ENCODE measurements at regions of chr17 and their contacts with region 1.

Region 1: DNA sequence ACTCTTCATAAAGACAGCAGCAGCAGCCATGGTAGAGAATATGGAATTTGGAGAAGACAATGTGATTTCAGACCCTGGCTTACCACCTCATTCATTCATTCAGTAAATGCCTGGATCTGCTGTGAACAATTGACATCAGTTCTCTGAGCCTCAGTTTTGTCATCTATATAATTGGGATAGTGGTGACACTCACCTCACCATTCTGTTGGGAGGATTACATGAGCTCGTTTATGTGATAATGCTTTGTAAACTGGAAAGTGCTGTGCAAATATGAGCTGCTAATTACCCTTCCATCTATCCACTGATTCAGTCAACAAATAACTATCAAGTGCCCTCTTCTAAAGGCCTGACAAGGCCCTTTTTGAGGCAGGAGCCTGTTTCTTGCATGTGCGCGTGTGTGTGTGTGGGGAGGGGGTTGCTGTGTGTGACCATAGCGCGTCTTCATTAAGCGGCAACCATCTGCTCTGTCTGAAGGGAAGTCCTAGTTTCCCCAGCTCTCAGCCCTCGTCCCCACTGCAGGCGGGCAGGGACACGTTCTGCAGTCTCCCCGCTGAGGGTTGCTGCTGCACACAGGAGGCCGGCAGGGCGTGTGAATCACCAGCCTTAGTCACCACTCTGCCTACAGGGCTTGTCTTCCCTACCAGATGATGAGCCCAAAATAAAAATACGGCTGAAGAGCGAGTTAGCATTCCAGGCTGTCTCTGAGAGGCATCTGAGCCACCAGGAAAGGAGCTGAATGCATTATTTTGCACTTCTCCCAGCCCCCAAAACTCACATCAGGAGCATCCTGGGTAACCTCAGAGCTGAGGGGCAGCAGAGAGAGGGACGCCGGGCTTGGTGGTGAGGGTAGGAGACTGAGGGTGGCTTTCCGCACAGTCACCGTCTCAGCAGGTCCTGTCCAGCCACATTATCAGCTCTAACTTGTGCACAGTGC is 19.9 kb downstream of the ARL4D start:
- DNase-seq: peak; percentile 94
- H3K4me3 Mint-ChIP-seq: peak overlapping the region; percentile 59
- H3K27ac Mint-ChIP-seq: peak overlapping the region; percentile 76
- H3K4me1 Mint-ChIP-seq: peaks cover 41% of the 10 kb centered on the region
- H3K27me3 Mint-ChIP-seq: no peaks in the 10 kb centered on the region
- CTCF ChIP-seq: no peak

Region 2: GRCh38 chr17:43388359-43389045 is 30.2 kb before region 1 on chr17:
- CTCF ChIA-PET with region 1: interaction called, 25 read pairs
- POLR2A ChIA-PET with region 1: interaction called, 654 read pairs
- intact Hi-C with region 1: no loop called
- DNase-seq: peak; percentile 94
- H3K4me3 Mint-ChIP-seq: peak overlapping the region; percentile 83
- H3K27ac Mint-ChIP-seq: peak overlapping the region; percentile 97
- H3K4me1 Mint-ChIP-seq: peaks cover 18% of the 10 kb centered on the region
- H3K27me3 Mint-ChIP-seq: no peaks in the 10 kb centered on the region
- CTCF ChIP-seq: no peak

Region 3: DNA sequence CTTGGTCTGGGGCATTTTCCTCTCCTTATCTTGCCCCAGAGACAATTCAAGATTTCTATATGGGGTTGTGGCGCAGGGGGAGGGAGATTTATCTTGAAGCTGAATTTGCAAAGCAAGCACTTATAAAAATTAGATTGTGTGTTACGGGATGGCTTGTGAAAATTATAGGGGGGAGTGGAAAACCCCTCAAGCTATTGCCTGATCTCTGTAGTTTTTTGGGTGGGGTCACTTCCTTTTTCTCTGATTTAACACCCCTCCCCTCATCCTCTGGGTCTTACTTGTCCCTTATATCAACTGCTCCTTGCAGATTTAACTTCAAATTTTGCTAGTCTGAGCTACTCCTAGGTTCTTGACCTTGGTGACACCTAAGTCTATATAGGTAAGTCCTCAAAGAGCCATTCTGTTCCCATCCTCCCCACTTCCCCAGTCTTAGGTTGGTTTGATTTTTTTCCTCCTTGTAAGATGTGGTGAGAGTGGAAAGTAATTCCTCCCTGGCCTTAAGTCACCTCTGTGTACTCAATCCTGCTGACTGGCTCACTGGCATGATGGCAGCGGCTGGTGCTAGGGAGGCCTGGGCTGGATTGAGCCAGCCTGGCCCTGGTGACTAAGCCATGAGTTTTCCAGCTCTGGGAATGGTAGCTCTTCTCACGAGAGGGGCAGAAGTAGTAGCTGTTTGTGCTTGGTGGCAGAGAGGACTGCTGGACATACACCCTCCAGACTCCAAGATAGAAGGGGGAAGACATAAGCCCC is 17.6 kb before region 1 on chr17:
- CTCF ChIA-PET with region 1: interaction called, 25 read pairs
- POLR2A ChIA-PET with region 1: interaction called, 654 read pairs
- intact Hi-C with region 1: loop called (anchors 1 kb)
- DNase-seq: peak; percentile 86
- H3K4me3 Mint-ChIP-seq: peak overlapping the region; percentile 92
- H3K27ac Mint-ChIP-seq: peak overlapping the region; percentile 57
- H3K4me1 Mint-ChIP-seq: peaks cover 21% of the 10 kb centered on the region
- H3K27me3 Mint-ChIP-seq: no peaks in the 10 kb centered on the region
- CTCF ChIP-seq: no peak

Region 4: DNA sequence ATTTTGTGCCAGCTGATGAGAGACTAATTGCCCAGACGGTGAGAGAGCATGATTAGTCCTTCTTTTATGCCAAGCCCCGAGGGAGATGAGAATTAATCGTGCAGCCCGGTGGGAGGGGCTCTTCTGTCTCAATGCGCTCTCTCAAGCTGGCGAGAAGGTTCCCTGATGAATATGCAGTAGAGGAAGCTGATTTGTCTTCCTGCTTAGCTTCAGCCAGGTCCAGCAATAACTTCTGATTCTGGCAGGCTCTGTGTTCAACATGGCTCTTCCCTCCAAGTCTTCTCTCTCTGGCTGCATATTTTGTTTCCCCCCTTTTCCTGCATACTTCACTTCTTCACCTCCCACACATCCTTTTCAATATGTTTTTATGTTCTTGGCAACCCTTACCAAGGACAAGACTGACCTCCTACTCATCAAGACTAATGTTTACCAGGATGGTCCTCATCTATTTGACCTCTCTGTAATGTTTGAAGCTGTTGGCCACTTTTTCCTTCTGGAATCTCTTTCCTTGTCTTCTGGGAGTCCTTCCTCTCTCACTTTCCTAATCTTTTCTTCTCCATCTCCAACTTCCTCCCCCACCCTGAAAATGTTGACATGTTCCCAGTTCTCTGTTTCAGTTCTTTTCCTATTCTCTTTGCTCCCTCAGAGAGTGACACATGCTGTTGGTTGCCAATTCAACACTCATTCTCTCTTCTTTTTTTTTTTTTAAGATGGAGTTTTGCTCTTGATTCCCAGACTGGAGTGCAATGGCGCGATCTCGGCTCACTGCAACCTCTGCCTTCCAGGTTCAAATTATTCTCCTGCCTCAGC is 13.2 kb after region 1 on chr17:
- CTCF ChIA-PET with region 1: interaction called, 8 read pairs
- POLR2A ChIA-PET with region 1: interaction called, 36 read pairs
- intact Hi-C with region 1: no loop called
- DNase-seq: peak; percentile 29
- H3K4me3 Mint-ChIP-seq: no peak overlapping the region
- H3K27ac Mint-ChIP-seq: no peak overlapping the region
- H3K4me1 Mint-ChIP-seq: peaks cover 40% of the 10 kb centered on the region
- H3K27me3 Mint-ChIP-seq: no peaks in the 10 kb centered on the region
- CTCF ChIP-seq: no peak

Region 5: DNA sequence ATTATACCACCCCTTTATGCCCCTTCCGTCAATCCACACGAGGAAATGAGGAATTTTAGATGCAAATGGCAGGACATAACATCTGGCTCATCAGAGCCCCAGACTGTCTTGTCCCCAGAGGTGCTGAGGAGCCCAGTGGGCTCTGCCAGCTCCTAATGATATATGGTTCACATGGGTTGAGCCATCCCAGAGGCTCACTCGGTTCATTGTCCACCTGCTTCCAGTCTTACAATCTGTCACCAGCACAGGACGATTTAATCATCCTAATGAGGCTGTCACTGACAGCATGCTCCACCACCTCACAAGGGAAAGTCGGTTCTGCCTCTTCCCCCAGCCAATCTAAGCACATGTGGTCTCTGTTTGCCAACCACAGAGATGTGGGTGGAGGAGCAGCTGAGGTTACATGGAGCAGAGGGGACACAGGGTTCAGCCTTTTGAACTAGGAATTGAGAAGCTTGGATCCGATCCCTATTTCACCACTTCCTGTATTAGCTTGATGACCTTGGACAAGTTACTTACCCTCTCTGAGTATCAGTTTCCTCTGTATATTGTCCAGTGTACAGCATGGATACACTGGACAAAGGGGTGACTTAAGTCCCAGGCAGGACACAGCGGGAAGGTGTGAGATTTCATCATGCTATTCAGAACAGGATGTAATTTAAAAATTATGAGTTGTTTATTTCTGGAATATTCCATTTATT is 38.1 kb after region 1 on chr17:
- CTCF ChIA-PET with region 1: interaction called, 5 read pairs
- POLR2A ChIA-PET with region 1: interaction called, 640 read pairs
- intact Hi-C with region 1: loop called (anchors 5 kb)
- DNase-seq: peak; percentile 91
- H3K4me3 Mint-ChIP-seq: no peak overlapping the region
- H3K27ac Mint-ChIP-seq: peak overlapping the region; percentile 63
- H3K4me1 Mint-ChIP-seq: peaks cover 21% of the 10 kb centered on the region
- H3K27me3 Mint-ChIP-seq: no peaks in the 10 kb centered on the region
- CTCF ChIP-seq: no peak

Region 6: DNA sequence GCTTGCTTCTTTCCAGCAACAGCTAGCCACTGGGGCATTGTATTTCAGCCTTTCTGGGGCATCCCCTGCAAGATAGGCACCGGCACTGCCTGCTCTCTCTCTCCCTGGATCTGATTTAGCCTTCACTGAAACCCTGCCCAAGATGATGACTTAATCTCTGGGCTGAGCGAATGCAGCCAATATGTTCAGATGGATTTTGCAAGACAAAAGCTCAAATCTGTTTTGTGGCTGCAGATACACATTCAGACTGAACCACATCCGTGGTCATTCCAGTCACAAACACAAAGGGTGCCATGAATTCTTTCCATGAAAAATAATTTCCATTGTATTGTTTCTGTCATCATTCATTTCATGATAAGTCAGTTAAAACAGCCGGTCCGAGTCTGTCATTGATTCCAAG is 315.7 kb after region 1 on chr17:
- CTCF ChIA-PET with region 1: no interaction called
- POLR2A ChIA-PET with region 1: no interaction called
- intact Hi-C with region 1: no loop called
- DNase-seq: peak; percentile 56
- H3K4me3 Mint-ChIP-seq: no peak overlapping the region
- H3K27ac Mint-ChIP-seq: no peak overlapping the region
- H3K4me1 Mint-ChIP-seq: peaks cover 7% of the 10 kb centered on the region
- H3K27me3 Mint-ChIP-seq: no peaks in the 10 kb centered on the region
- CTCF ChIP-seq: no peak

Measured in MCF 10A (cell line).